Natural killer cell (primary cell): ENCODE measurements at regions of chrX and their contacts with region 1.

Region 1: GRCh38 chrX:49922291-49923241 is at the start of gene CLCN5:
- DNase-seq: peak; percentile 87 to 97
- ATAC-seq: peak; percentile 92 to 98 (median 96)
- H3K4me3 ChIP-seq: peak within 1 kb of the TSS; percentile 64
- H3K4me3 Mint-ChIP-seq: peak within 1 kb of the TSS; percentile 82
- H3K27ac ChIP-seq: peak within 1 kb of the TSS; percentile 54
- H3K27ac Mint-ChIP-seq: peak within 1 kb of the TSS in 1 of 2 donors; percentile 72
- H3K4me1 ChIP-seq: peaks cover 8% of the 10 kb centered on the region
- H3K4me1 Mint-ChIP-seq: no peaks in the 10 kb centered on the region
- H3K27me3 ChIP-seq: no peaks in the 10 kb centered on the region
- H3K27me3 Mint-ChIP-seq: peaks cover 0 to 15% of the 10 kb centered on the region in 2 donors
- CTCF ChIP-seq: no peak
- total RNA-seq, gene CLCN5: 2.5 to 4.5 (median 4.0) TPM

Region 2: DNA sequence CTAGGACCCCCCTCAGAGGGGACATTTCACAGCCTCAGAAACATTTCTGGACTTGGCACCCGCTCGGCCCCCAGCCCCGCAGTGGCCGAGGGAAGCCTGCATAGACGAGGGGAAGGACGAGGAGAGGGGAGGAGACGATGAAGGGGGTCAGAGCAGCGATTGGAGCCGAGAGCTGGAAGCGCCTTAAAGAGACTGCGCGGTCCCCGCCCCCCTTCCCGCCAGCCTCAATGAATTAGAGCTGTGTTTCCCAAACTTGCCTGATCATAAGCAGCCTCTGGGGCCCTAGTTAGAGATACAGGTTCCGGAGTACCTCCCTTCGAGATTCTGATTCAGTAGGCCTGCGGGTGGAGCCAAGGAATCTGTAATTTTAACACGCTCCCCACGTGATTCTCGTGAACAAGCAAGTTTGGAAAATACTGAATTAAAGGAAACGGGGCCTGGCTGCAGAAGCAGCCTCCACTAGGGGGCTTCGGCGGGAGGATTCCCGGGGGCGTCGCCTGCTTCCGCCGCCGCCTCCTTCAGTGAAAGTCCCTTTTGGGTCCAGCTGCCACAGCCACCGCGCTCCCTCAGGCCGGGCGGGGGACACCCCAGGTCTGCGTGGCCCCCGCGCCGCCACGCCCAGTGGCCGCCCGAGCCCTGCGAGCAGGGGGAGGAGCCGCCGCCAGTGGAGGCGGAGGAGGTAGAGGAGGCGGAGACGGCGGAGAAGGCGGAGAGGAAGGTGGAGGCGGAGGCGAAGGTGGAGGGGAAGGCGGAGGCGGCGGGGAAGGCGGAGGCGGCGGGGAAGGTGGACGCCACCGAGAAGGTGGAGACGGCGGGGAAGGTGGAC is 43.5 kb before region 1 on chrX and contains the start of gene USP27X:
- intact Hi-C with region 1: loop called (anchors 1 kb)
- DNase-seq: peak; percentile 69 to 89
- ATAC-seq: peak; percentile 94 to 97 (median 94)
- H3K4me3 ChIP-seq: peak within 1 kb of the TSS; percentile 58
- H3K4me3 Mint-ChIP-seq: peak within 1 kb of the TSS; percentile 81
- H3K27ac ChIP-seq: peak within 1 kb of the TSS; percentile 61
- H3K27ac Mint-ChIP-seq: peak within 1 kb of the TSS; percentile 26 to 74
- H3K4me1 ChIP-seq: peaks cover 26% of the 10 kb centered on the region
- H3K4me1 Mint-ChIP-seq: peaks cover 0 to 18% of the 10 kb centered on the region in 2 donors
- H3K27me3 ChIP-seq: no peaks in the 10 kb centered on the region
- H3K27me3 Mint-ChIP-seq: no peaks in the 10 kb centered on the region
- CTCF ChIP-seq: peak; percentile 43
- total RNA-seq, gene USP27X: 1.7 to 2.4 (median 2.0) TPM

Region 3: GRCh38 chrX:49901048-49901447 is 21.5 kb before region 1 on chrX:
- intact Hi-C with region 1: no loop called
- DNase-seq: no peak
- ATAC-seq: no peak
- H3K4me3 ChIP-seq: no peak overlapping the region
- H3K4me3 Mint-ChIP-seq: no peak overlapping the region
- H3K27ac ChIP-seq: no peak overlapping the region
- H3K27ac Mint-ChIP-seq: no peak overlapping the region
- H3K4me1 ChIP-seq: no peaks in the 10 kb centered on the region
- H3K4me1 Mint-ChIP-seq: peaks cover 0 to 6% of the 10 kb centered on the region in 2 donors
- H3K27me3 ChIP-seq: no peaks in the 10 kb centered on the region
- H3K27me3 Mint-ChIP-seq: peaks cover 11 to 50% of the 10 kb centered on the region in 2 donors
- CTCF ChIP-seq: no peak

Region 4: GRCh38 chrX:50093625-50094024 is 171.1 kb after region 1 on chrX:
- intact Hi-C with region 1: no loop called
- DNase-seq: no peak
- ATAC-seq: no peak
- H3K4me3 ChIP-seq: no peak overlapping the region
- H3K4me3 Mint-ChIP-seq: no peak overlapping the region
- H3K27ac ChIP-seq: no peak overlapping the region
- H3K27ac Mint-ChIP-seq: no peak overlapping the region
- H3K4me1 ChIP-seq: no peaks in the 10 kb centered on the region
- H3K4me1 Mint-ChIP-seq: no peaks in the 10 kb centered on the region
- H3K27me3 ChIP-seq: no peaks in the 10 kb centered on the region
- H3K27me3 Mint-ChIP-seq: peaks cover 0 to 9% of the 10 kb centered on the region in 2 donors
- CTCF ChIP-seq: no peak

Region 5: GRCh38 chrX:50180073-50180940 is 257.7 kb after region 1 on chrX:
- intact Hi-C with region 1: no loop called
- DNase-seq: no peak
- ATAC-seq: peak in 1 of 3 donors; percentile 21
- H3K4me3 ChIP-seq: no peak overlapping the region
- H3K4me3 Mint-ChIP-seq: no peak overlapping the region
- H3K27ac ChIP-seq: no peak overlapping the region
- H3K27ac Mint-ChIP-seq: no peak overlapping the region
- H3K4me1 ChIP-seq: no peaks in the 10 kb centered on the region
- H3K4me1 Mint-ChIP-seq: peaks cover 0 to 9% of the 10 kb centered on the region in 2 donors
- H3K27me3 ChIP-seq: no peaks in the 10 kb centered on the region
- H3K27me3 Mint-ChIP-seq: peaks cover 0 to under 1% of the 10 kb centered on the region in 2 donors
- CTCF ChIP-seq: no peak